Naive thymus-derived CD8-positive, alpha-beta T cell (primary cell): ENCODE measurements at regions of chr10 and their contacts with region 1.

Region 1: GRCh38 chr10:14543046-14543903 is 212.6 kb upstream of the FRMD4A start:
- DNase-seq: peak in 8 of 10 donors; percentile 51 to 82 (median 75)
- ATAC-seq: peak; percentile 67 to 87
- H3K4me3 Mint-ChIP-seq: peak overlapping the region; percentile 55 to 82 (median 77)
- H3K27ac Mint-ChIP-seq: peak overlapping the region; percentile 81 to 98 (median 96)
- H3K4me1 Mint-ChIP-seq: peaks cover 42 to 94% (median 92%) of the 10 kb centered on the region in 4 donors
- H3K27me3 Mint-ChIP-seq: no peaks in the 10 kb centered on the region

Region 2: DNA sequence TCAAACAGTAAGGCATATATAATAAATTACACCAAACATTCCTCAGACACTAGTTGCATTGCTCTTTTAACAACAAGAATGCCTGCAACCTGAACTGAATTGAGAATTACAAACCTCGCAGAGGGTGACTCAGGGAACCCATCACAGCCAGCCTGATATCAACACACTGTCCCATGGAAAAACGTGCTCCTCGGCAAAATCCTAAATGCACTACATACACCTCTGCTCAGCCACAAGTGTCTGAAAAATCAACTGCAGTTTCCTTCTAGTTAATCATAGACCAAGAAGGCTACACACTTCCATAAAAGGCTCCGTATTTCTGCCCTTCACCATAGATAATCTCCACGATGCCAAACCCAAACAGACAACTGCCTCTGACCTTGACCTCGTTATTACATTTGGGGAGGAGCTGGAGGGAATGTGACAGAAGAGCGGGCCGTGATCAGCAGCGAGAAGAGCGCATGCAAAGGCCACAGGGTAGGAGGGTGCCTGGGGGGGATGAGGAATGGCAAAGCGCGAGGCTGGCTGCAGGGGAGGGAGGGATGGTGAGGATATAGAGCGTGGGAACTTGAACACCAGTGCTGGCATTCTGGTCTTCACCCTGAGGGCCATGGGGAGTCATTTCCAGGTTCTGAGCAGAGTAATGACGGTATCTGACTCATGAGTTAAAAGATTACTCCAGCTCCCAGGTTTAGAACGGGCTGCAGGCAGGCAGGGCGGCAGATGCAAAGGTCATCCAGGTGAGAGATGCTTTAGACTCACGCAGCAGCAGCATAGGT is 10.6 kb before region 1 on chr10:
- POLR2A ChIA-PET with region 1: interaction called, 12 read pairs
- DNase-seq: no peak
- ATAC-seq: no peak
- H3K4me3 Mint-ChIP-seq: peak overlapping the region in 8 of 10 donors; percentile 18 to 59 (median 43)
- H3K27ac Mint-ChIP-seq: peak overlapping the region; percentile 44 to 90 (median 68)
- H3K4me1 Mint-ChIP-seq: peaks cover 51 to 97% (median 87%) of the 10 kb centered on the region in 4 donors
- H3K27me3 Mint-ChIP-seq: no peaks in the 10 kb centered on the region

Region 3: DNA sequence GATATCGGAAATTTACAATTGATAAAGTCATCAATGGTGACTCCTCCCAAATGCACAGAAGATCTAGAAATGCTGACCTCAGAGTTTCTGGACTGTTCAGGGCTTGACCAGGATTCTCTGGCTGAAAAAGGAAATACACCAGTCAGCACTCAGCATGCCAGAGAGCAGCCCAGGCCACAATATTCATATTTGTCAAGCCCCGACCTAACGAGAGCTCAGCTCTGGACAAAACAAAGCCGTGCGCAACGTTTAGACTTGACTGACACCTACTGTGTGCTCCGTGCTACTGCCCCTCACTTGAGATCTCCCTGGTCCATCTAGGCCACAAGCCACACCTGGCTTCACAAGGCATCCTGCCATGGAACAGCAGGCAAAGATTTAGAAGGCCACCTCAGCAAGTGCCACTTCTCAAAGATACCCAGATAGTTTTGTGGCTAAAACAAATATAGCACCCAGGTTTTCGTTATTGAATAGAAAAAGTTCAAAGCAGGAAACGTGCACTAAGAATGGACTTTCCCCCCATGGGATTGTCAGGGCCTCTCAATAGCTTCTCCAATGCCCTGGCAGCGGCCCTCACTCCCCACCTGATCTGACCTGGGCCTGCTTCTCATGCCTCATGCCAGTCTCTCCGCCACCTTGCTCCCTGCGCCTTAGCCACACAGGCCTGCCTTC is 13.1 kb after region 1 on chr10:
- POLR2A ChIA-PET with region 1: interaction called, 23 read pairs
- DNase-seq: no peak
- ATAC-seq: peak in 1 of 2 donors; percentile 3
- H3K4me3 Mint-ChIP-seq: peak overlapping the region; percentile 19 to 89 (median 74)
- H3K27ac Mint-ChIP-seq: peak overlapping the region; percentile 89 to 97 (median 92)
- H3K4me1 Mint-ChIP-seq: peaks cover 71 to 99% (median 95%) of the 10 kb centered on the region in 4 donors
- H3K27me3 Mint-ChIP-seq: no peaks in the 10 kb centered on the region

Region 4: GRCh38 chr10:14571866-14572507 is 28.7 kb after region 1 on chr10:
- POLR2A ChIA-PET with region 1: interaction called, 37 read pairs
- DNase-seq: peak; percentile 26 to 93 (median 81)
- ATAC-seq: peak; percentile 67 to 76
- H3K4me3 Mint-ChIP-seq: peak overlapping the region; percentile 90 to 98 (median 96)
- H3K27ac Mint-ChIP-seq: peak overlapping the region; percentile 92 to 99 (median 99)
- H3K4me1 Mint-ChIP-seq: peaks cover 34 to 92% (median 80%) of the 10 kb centered on the region in 4 donors
- H3K27me3 Mint-ChIP-seq: no peaks in the 10 kb centered on the region

Region 5: GRCh38 chr10:14583252-14583651 is 40.0 kb after region 1 on chr10:
- POLR2A ChIA-PET with region 1: interaction called, 17 read pairs
- DNase-seq: peak; percentile 61 to 94 (median 86)
- ATAC-seq: peak; percentile 70 to 78
- H3K4me3 Mint-ChIP-seq: peak overlapping the region; percentile 72 to 90 (median 83)
- H3K27ac Mint-ChIP-seq: peak overlapping the region; percentile 90 to 100 (median 98)
- H3K4me1 Mint-ChIP-seq: peaks cover 49 to 98% (median 95%) of the 10 kb centered on the region in 4 donors
- H3K27me3 Mint-ChIP-seq: no peaks in the 10 kb centered on the region

Region 6: DNA sequence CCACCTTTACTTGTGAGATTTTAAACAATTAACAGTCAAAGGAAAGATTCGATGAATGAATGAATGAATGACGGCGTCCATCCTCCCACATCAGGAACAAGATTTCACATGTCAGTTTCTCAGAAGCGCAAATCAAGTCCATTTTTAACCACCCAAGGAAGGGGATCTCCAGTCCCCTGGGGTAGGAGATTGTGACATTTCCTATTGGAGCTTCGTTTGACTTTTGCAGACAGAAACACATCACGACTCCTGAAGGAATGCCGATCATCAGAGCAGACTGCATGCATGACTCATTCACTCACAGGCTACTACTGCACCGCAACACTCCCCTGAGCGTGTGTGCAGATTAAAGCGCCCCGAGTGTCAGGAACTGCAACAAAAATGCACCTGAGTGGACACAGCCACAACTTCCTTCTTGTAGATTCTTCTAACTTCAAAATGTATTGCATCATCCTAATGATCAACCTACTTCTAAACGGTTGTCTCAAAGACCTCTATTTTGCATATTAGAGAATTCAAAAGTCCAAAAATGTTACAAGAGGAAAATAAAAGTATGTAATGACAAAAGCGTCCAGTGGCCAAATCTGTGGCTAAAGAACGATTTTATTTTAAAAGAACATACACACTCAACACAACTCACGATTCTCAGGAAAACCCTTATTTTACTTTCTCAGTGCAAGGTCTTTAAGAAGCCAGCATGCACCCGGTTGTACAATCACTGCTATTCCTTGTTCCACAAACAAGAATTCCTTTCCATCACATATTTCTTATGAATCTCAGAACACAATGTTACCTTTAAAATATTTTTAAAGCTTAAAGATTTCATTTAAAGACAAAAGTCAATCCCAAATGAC is 58.8 kb after region 1 on chr10:
- POLR2A ChIA-PET with region 1: interaction called, 12 read pairs
- DNase-seq: peak in 7 of 10 donors; percentile 41 to 79 (median 48)
- ATAC-seq: peak; percentile 14 to 25
- H3K4me3 Mint-ChIP-seq: peak overlapping the region; percentile 80 to 100 (median 98)
- H3K27ac Mint-ChIP-seq: peak overlapping the region; percentile 80 to 98 (median 92)
- H3K4me1 Mint-ChIP-seq: peaks cover 41 to 87% (median 72%) of the 10 kb centered on the region in 4 donors
- H3K27me3 Mint-ChIP-seq: no peaks in the 10 kb centered on the region

Region 7: DNA sequence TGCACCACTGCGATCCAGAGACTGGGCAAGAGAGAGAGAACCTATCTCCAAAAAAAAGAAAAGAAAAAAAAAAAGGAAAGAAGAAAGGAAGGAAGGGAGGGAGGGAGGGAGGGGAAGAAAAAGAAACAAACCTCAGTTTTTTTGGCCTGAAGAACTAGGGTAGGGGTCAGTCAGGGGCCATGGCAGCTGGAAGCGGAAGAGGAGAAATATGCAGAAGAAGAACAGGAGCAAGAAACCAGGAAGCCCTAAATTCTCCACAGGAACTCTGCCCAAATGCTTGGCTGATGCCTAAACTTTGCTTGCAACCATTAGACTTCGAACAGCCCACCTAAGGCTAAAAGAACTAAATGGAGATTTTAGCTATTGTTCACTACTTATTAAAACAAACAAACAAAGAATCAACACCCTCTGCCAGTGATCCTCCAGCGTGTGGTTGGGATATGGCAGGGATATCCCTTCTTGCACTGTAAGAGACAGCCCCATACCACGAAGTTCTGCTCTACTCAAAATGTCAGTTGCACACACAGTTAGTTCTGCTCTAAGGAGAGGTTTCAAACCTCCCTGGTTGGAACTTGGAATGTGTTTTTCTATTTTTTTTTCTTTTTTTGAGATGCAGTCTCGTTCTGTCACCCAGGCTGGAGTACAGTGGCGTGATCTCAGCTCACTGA is 91.9 kb after region 1 on chr10:
- POLR2A ChIA-PET with region 1: no interaction called
- DNase-seq: no peak
- ATAC-seq: no peak
- H3K4me3 Mint-ChIP-seq: no peak overlapping the region
- H3K27ac Mint-ChIP-seq: peak overlapping the region in 1 of 10 donors; percentile 69
- H3K4me1 Mint-ChIP-seq: peaks cover 1 to 5% (median 3%) of the 10 kb centered on the region in 4 donors
- H3K27me3 Mint-ChIP-seq: no peaks in the 10 kb centered on the region